Activated CD4-positive, alpha-beta T cell treated with anti-CD3 and anti-CD28 coated beads, Interleukin-2, amount 10 ng/mL, durations not matched to agents 24 days and 14 days (primary cell): ENCODE measurements at regions of chrX and their contacts with region 1.

Region 1: GRCh38 chrX:81121513-81122382 is 80.0 kb downstream of the HMGN5 start:
- DNase-seq: peak; percentile 96
- H3K4me3 Mint-ChIP-seq: peak overlapping the region; percentile 89
- H3K27ac Mint-ChIP-seq: peak overlapping the region; percentile 87
- H3K4me1 Mint-ChIP-seq: peaks cover 9% of the 10 kb centered on the region
- H3K27me3 Mint-ChIP-seq: peaks cover 14% of the 10 kb centered on the region

Region 2: DNA sequence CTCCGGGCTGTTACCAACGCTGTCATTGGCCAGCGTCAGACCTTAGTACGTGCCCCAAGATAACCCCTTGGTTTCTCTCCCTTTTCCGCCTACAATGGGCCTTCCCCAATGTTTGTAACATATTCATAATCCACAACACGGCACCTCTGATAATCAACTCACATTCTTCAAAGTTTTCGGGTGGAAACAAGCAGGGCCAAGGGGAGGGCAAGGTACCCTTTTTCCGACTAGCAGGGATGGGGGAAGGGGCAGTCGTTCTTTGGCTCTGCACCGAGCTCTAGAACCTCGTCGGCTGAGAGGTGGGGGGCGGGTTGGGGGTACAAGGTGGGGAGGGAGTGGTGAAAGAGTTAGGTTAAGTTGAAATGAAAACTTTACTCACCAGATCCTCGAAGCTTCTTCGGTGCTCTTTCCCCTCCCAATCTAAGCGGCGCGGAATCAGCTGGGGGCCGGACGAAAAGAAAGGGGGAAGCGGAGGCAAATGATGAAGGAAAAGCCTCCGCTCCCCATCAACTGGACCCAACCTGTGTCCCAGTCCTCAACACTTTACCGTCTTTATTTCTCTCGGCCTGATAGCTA is 313.5 kb before region 1 on chrX:
- intact Hi-C with region 1: loop called (anchors 1 kb)
- DNase-seq: peak; percentile 93
- H3K4me3 Mint-ChIP-seq: peak overlapping the region; percentile 92
- H3K27ac Mint-ChIP-seq: peak overlapping the region; percentile 95
- H3K4me1 Mint-ChIP-seq: peaks cover 10% of the 10 kb centered on the region
- H3K27me3 Mint-ChIP-seq: peaks cover 2% of the 10 kb centered on the region

Region 3: GRCh38 chrX:80876877-80877276 is 244.9 kb before region 1 on chrX:
- intact Hi-C with region 1: loop called (anchors 2 kb)
- DNase-seq: no peak
- H3K4me3 Mint-ChIP-seq: no peak overlapping the region
- H3K27ac Mint-ChIP-seq: no peak overlapping the region
- H3K4me1 Mint-ChIP-seq: no peaks in the 10 kb centered on the region
- H3K27me3 Mint-ChIP-seq: no peaks in the 10 kb centered on the region

Region 4: DNA sequence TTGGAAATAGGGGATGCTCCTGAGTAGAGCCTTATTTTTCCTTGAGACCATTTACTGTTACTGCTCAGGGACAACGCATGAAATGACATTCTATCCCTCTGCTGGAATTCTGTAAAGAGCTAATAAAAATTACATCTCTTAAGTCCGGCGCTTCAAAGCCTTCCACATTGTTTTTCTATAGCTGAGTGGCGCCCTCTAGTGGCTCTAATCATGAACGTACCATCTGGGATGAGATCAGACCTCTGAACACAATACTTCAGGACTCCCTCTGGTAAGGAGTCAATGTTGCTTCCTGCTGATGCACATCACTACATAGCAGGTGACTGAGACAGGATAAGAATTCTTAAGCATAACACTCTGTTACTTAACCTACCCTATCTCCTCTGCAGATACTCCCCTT is 74.0 kb after region 1 on chrX:
- intact Hi-C with region 1: loop called (anchors 2 kb)
- DNase-seq: peak; percentile 86
- H3K4me3 Mint-ChIP-seq: no peak overlapping the region
- H3K27ac Mint-ChIP-seq: no peak overlapping the region
- H3K4me1 Mint-ChIP-seq: peaks cover 2% of the 10 kb centered on the region
- H3K27me3 Mint-ChIP-seq: no peaks in the 10 kb centered on the region

Region 5: DNA sequence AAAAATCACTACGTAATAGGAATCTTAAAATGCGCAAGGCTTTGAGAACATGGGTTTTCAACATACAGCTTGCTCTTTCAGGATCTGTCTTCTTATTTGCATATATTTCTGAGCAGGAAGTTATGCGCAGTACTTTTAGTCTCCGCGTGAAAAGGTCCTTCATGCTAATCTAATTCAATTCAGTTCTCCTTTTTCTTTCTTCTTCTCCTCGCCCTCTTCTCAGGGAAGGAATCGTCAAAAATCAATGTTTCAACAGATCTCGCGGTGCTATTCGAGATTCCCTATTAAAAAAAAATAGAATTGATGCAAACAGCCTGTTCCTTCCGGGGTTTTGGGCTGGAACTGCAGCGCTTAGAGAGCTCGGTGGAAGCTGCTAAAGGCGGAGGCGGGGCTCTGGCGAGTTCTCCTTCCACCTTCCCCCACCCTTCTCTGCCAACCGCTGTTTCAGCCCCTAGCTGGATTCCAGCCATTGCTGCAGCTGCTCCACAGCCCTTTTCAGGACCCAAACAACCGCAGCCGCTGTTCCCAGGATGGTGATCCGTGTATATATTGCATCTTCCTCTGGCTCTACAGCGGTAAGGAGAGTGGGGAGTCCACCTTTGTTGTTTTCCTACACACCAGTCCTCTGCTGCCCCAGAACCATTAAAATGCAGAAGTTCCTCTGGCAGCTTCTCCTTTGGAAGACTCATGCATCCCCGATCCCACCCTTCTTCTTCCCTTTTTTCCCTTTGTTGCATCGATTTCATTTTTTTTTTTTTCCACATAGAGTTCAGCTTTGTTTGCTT is 80.1 kb after region 1 on chrX and contains the starts of genes HMGN5 and SH3BGRL:
- intact Hi-C with region 1: loop called (anchors 1 kb)
- DNase-seq: peak; percentile 89
- H3K4me3 Mint-ChIP-seq: peak within 1 kb of the TSS; percentile 91
- H3K27ac Mint-ChIP-seq: peak within 1 kb of the TSS; percentile 95
- H3K4me1 Mint-ChIP-seq: peaks cover 29% of the 10 kb centered on the region
- H3K27me3 Mint-ChIP-seq: no peaks in the 10 kb centered on the region
- total RNA-seq, gene HMGN5: 0.88 and 1.5 TPM in 2 replicates
- total RNA-seq, gene SH3BGRL: 35.7 and 35.9 TPM in 2 replicates